ENCODE measurements at regions of chr18 and their contacts with region 1.

Region 1: DNA sequence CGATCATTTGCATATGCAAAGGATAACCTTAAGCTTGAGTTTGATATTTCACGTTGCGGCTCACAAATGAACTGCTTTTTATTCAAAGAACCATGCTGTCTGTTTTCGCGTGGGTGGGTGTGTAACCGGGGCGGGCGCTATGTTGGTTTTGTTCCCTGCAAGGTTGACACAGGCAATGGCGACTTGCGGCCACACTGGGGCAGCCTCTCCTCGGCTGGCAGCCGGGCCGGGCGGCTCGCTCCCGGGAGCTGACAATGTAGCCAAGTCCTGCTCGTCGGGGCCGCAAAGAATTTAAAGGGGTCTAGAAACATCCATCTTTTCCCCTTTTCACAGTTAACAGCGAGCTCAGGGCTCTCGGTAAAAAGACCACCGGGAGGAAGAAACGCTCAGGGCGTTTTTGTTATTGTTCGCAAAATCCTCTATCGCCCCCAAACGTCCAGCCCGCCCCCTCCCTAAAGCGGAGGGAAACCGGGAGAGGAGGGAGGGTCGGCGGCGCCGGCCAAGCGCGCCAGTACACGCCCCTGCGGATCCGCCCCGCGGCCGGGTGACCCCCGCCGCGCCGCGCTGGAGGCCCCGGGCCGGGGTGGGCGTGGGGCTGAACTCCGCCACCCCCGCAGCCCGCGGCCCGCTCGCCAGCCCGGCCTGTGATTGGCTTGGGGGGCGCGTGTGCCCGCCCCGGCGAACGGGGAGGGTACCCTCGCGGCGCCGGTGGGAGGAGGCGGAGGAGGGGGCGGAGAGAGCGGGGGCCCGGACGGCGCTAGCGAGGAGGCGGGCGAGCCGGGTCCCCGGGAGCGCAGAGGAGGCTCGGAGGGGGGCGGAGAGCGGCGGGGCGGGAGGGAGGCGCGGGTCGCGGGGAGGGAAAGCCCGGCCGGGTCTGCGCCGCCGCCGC is at the start of gene NEDD4L:
- DNase-seq: peak; percentile 48 to 85 (median 64)
- ATAC-seq: peak; percentile 75
- H3K4me3 ChIP-seq: peak within 1 kb of the TSS; percentile 72
- H3K4me3 Mint-ChIP-seq: peak within 1 kb of the TSS; percentile 97
- H3K27ac ChIP-seq: no peak within 1 kb of the TSS
- H3K27ac Mint-ChIP-seq: peak within 1 kb of the TSS; percentile 75
- H3K4me1 ChIP-seq: peaks cover 23% of the 10 kb centered on the region
- H3K4me1 Mint-ChIP-seq: peaks cover 33% of the 10 kb centered on the region
- H3K27me3 ChIP-seq: peaks cover 0 to 4% of the 10 kb centered on the region in 2 experiments
- H3K27me3 Mint-ChIP-seq: peaks cover 19% of the 10 kb centered on the region
- CTCF ChIP-seq: peak; percentile 80
- total RNA-seq, gene NEDD4L: 11.2 to 13.7 TPM

Region 2: GRCh38 chr18:57581302-57581934 is 462.3 kb before region 1 on chr18:
- CTCF ChIA-PET with region 1: no interaction called
- POLR2A ChIA-PET with region 1: no interaction called
- intact Hi-C with region 1: loop called in 1 of 2 experiments (anchors 5 kb)
- DNase-seq: peak in 3 of 14 experiments; percentile 36 to 43 (median 43)
- ATAC-seq: no peak
- H3K4me3 ChIP-seq: no peak overlapping the region
- H3K4me3 Mint-ChIP-seq: no peak overlapping the region
- H3K27ac ChIP-seq: no peak overlapping the region
- H3K27ac Mint-ChIP-seq: no peak overlapping the region
- H3K4me1 ChIP-seq: peaks cover 19% of the 10 kb centered on the region
- H3K4me1 Mint-ChIP-seq: peaks cover 44% of the 10 kb centered on the region
- H3K27me3 ChIP-seq: no peaks in the 10 kb centered on the region
- H3K27me3 Mint-ChIP-seq: no peaks in the 10 kb centered on the region
- CTCF ChIP-seq: no peak

Region 3: GRCh38 chr18:58117786-58118403 is 74.2 kb after region 1 on chr18:
- CTCF ChIA-PET with region 1: interaction called, 23 read pairs
- POLR2A ChIA-PET with region 1: interaction called, 9 read pairs
- intact Hi-C with region 1: loop called (anchors 1 kb)
- DNase-seq: peak in 1 of 14 experiments; percentile 7
- ATAC-seq: no peak
- H3K4me3 ChIP-seq: no peak overlapping the region
- H3K4me3 Mint-ChIP-seq: no peak overlapping the region
- H3K27ac ChIP-seq: no peak overlapping the region
- H3K27ac Mint-ChIP-seq: no peak overlapping the region
- H3K4me1 ChIP-seq: no peaks in the 10 kb centered on the region
- H3K4me1 Mint-ChIP-seq: no peaks in the 10 kb centered on the region
- H3K27me3 ChIP-seq: no peaks in the 10 kb centered on the region
- H3K27me3 Mint-ChIP-seq: no peaks in the 10 kb centered on the region
- CTCF ChIP-seq: no peak

Region 4: GRCh38 chr18:58180738-58181353 is 137.1 kb after region 1 on chr18:
- CTCF ChIA-PET with region 1: interaction called, 5 read pairs
- POLR2A ChIA-PET with region 1: no interaction called
- intact Hi-C with region 1: loop called (anchors 2 to 5 kb)
- DNase-seq: peak; percentile 33 to 77 (median 54)
- ATAC-seq: peak; percentile 51
- H3K4me3 ChIP-seq: no peak overlapping the region
- H3K4me3 Mint-ChIP-seq: no peak overlapping the region
- H3K27ac ChIP-seq: no peak overlapping the region
- H3K27ac Mint-ChIP-seq: no peak overlapping the region
- H3K4me1 ChIP-seq: no peaks in the 10 kb centered on the region
- H3K4me1 Mint-ChIP-seq: no peaks in the 10 kb centered on the region
- H3K27me3 ChIP-seq: no peaks in the 10 kb centered on the region
- H3K27me3 Mint-ChIP-seq: peaks cover 6% of the 10 kb centered on the region
- CTCF ChIP-seq: peak; percentile 85

Region 5: GRCh38 chr18:58484989-58485981 is 441.6 kb after region 1 on chr18:
- CTCF ChIA-PET with region 1: no interaction called
- POLR2A ChIA-PET with region 1: no interaction called
- intact Hi-C with region 1: loop called (anchors 5 kb)
- DNase-seq: no peak
- ATAC-seq: no peak
- H3K4me3 ChIP-seq: no peak overlapping the region
- H3K4me3 Mint-ChIP-seq: no peak overlapping the region
- H3K27ac ChIP-seq: no peak overlapping the region
- H3K27ac Mint-ChIP-seq: no peak overlapping the region
- H3K4me1 ChIP-seq: peaks cover 2% of the 10 kb centered on the region
- H3K4me1 Mint-ChIP-seq: peaks cover 12% of the 10 kb centered on the region
- H3K27me3 ChIP-seq: no peaks in the 10 kb centered on the region
- H3K27me3 Mint-ChIP-seq: peaks cover 21% of the 10 kb centered on the region
- CTCF ChIP-seq: no peak

Region 6: GRCh38 chr18:58768293-58768974 is 724.7 kb after region 1 on chr18:
- CTCF ChIA-PET with region 1: no interaction called
- POLR2A ChIA-PET with region 1: no interaction called
- intact Hi-C with region 1: loop called in 1 of 2 experiments (anchors 10 kb)
- DNase-seq: peak; percentile 54 to 81 (median 62)
- ATAC-seq: peak; percentile 81
- H3K4me3 ChIP-seq: peak overlapping the region; percentile 14
- H3K4me3 Mint-ChIP-seq: no peak overlapping the region
- H3K27ac ChIP-seq: no peak overlapping the region
- H3K27ac Mint-ChIP-seq: no peak overlapping the region
- H3K4me1 ChIP-seq: peaks cover 17% of the 10 kb centered on the region
- H3K4me1 Mint-ChIP-seq: peaks cover 15% of the 10 kb centered on the region
- H3K27me3 ChIP-seq: peaks cover 14 to 36% of the 10 kb centered on the region in 2 experiments
- H3K27me3 Mint-ChIP-seq: peaks cover 72% of the 10 kb centered on the region
- CTCF ChIP-seq: peak; percentile 67

Measured in CD4-positive, alpha-beta T cell (primary cell).